ENCODE measurements at regions of chr6 and their contacts with region 1.

Region 1: GRCh38 chr6:31729515-31729978 is 448 bp upstream of the DDAH2 start:
- DNase-seq: peak; percentile 72 to 83 (median 77)
- H3K4me3 ChIP-seq: peak overlapping the region; percentile 87 to 96
- H3K4me3 Mint-ChIP-seq: peak overlapping the region; percentile 94 to 98 (median 97)
- H3K27ac ChIP-seq: peak overlapping the region; percentile 68
- H3K27ac Mint-ChIP-seq: peak overlapping the region; percentile 89 to 97 (median 94)
- H3K4me1 ChIP-seq: peaks cover 65% of the 10 kb centered on the region
- H3K4me1 Mint-ChIP-seq: peaks cover 32 to 70% (median 47%) of the 10 kb centered on the region in 4 donors
- H3K27me3 ChIP-seq: no peaks in the 10 kb centered on the region
- H3K27me3 Mint-ChIP-seq: no peaks in the 10 kb centered on the region

Region 2: DNA sequence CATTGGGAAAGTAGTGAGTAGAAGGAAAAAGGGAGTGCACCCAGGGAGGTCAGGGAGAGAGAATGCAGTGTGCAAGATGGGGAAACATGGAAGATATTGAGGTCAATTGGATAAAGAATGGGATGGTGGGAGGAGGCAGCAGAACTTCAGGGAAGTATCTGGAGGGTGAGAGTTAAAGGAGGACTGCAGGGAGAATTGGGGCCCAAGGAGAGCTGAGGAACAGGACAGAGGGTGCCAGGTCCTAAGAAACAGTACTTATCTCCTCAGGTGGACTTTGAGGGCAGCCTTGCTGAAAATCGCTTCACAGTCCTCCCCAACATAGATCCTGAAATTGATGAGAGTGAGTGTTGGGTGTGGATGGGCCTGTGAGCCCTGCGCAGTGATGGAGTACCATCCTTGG is 28.7 kb after region 1 on chr6:
- CTCF ChIA-PET with region 1: no interaction called
- POLR2A ChIA-PET with region 1: no interaction called
- intact Hi-C with region 1: no loop called
- DNase-seq: no peak
- H3K4me3 ChIP-seq: no peak overlapping the region
- H3K4me3 Mint-ChIP-seq: no peak overlapping the region
- H3K27ac ChIP-seq: no peak overlapping the region
- H3K27ac Mint-ChIP-seq: peak overlapping the region in 3 of 7 donors; percentile 10 to 72 (median 38)
- H3K4me1 ChIP-seq: no peaks in the 10 kb centered on the region
- H3K4me1 Mint-ChIP-seq: peaks cover 0 to 5% (median 0%) of the 10 kb centered on the region in 4 donors
- H3K27me3 ChIP-seq: no peaks in the 10 kb centered on the region
- H3K27me3 Mint-ChIP-seq: no peaks in the 10 kb centered on the region

Region 3: DNA sequence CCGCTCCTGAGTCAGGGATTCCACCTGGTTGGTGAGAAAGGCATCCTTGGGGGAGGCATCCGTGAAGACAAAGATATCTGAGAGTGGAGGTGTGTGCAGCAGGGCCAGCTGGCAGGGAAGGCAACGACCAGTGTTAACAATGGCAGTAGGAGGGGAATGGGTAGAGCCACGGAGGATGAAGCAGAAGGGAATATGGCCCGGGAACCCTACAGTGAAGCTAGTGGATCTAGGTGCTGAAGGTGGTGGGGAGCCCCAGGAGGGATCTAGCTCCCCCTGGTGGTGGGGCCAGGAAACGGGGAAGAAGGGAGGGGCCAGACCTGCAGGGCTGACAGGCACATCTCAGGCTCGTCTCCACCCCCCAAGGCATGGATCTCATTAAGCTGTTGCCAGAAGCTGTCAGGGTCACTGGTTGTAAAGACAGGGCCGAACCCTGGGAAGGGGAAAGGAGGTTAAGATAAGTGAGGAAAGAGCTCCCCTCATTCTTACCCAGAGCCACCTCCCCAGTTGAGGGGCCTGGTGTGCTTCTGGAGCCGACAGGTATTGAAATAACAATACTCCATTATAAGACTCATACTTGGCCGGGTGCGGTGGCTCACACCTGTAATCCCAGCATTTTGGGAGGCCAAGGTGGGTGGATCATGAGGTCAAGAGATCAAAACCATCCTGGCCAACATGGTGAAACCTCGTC is 40.3 kb after region 1 on chr6:
- CTCF ChIA-PET with region 1: interaction called, 173 read pairs
- POLR2A ChIA-PET with region 1: interaction called, 78 read pairs
- intact Hi-C with region 1: loop called (anchors 1 kb)
- DNase-seq: peak; percentile 75 to 81 (median 80)
- H3K4me3 ChIP-seq: no peak overlapping the region
- H3K4me3 Mint-ChIP-seq: peak overlapping the region in 2 of 8 donors; percentile 42 to 57
- H3K27ac ChIP-seq: no peak overlapping the region
- H3K27ac Mint-ChIP-seq: peak overlapping the region in 5 of 7 donors; percentile 0 to 65 (median 36)
- H3K4me1 ChIP-seq: peaks cover 35% of the 10 kb centered on the region
- H3K4me1 Mint-ChIP-seq: peaks cover 15 to 34% (median 24%) of the 10 kb centered on the region in 4 donors
- H3K27me3 ChIP-seq: no peaks in the 10 kb centered on the region
- H3K27me3 Mint-ChIP-seq: no peaks in the 10 kb centered on the region

Region 4: GRCh38 chr6:31806465-31807272 is 77.1 kb after region 1 on chr6 and contains the start of gene LSM2:
- CTCF ChIA-PET with region 1: interaction called, 13 read pairs
- POLR2A ChIA-PET with region 1: interaction called, 63 read pairs
- intact Hi-C with region 1: no loop called
- DNase-seq: peak; percentile 97 to 98 (median 97)
- H3K4me3 ChIP-seq: peak within 1 kb of the TSS; percentile 84 to 89
- H3K4me3 Mint-ChIP-seq: peak within 1 kb of the TSS; percentile 86 to 97 (median 90)
- H3K27ac ChIP-seq: peak within 1 kb of the TSS; percentile 80
- H3K27ac Mint-ChIP-seq: peak within 1 kb of the TSS; percentile 89 to 97 (median 93)
- H3K4me1 ChIP-seq: peaks cover 23% of the 10 kb centered on the region
- H3K4me1 Mint-ChIP-seq: peaks cover 11 to 37% (median 27%) of the 10 kb centered on the region in 4 donors
- H3K27me3 ChIP-seq: no peaks in the 10 kb centered on the region
- H3K27me3 Mint-ChIP-seq: no peaks in the 10 kb centered on the region
- total RNA-seq, gene LSM2: 30.0 to 34.6 TPM

Region 5: DNA sequence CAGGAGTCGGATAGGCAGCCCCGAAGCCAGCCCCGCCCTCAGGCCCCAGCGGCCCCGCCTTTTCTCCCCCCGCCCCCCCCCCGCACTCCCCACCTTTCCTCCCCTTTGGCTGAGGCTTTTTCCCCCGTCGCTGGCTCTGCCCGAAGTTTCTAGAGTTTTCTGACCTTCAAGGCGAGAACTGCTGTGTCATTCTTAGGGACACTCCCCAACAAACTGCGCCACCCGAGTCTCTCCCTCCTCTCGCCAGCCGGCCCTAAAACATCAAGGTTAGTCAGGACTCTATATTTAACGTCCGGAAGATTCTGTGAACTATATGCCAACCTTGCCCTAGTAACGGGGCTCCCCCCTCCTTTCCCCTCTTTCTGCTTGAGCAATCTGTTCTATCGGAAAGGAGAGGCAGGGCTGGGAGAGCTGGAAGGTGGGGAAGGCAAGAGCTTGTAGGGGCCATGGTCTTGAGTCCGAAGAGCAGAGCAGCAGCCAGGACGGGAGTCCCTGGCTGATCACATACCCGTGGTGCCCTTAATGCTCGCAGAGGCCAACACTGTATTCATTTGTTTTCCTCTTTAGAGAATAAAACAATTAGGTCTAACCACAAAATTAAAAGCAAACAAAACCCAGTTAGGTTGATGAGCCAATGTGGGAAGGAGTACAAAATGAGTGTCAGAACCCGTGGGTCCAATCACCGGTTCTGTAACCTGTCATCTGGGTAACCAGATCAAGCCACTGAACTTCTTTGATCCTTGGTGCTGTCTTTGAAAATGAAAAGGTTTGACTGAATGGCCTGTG is 92.7 kb after region 1 on chr6:
- CTCF ChIA-PET with region 1: interaction called, 21 read pairs
- POLR2A ChIA-PET with region 1: interaction called, 81 read pairs
- intact Hi-C with region 1: loop called (anchors 2 kb)
- DNase-seq: peak; percentile 71 to 83 (median 73)
- H3K4me3 ChIP-seq: peak overlapping the region; percentile 84 to 96
- H3K4me3 Mint-ChIP-seq: peak overlapping the region; percentile 94 to 98 (median 97)
- H3K27ac ChIP-seq: peak overlapping the region; percentile 74
- H3K27ac Mint-ChIP-seq: peak overlapping the region; percentile 98 to 99 (median 98)
- H3K4me1 ChIP-seq: peaks cover 72% of the 10 kb centered on the region
- H3K4me1 Mint-ChIP-seq: peaks cover 31 to 81% (median 54%) of the 10 kb centered on the region in 4 donors
- H3K27me3 ChIP-seq: no peaks in the 10 kb centered on the region
- H3K27me3 Mint-ChIP-seq: no peaks in the 10 kb centered on the region

Region 6: GRCh38 chr6:31888276-31889258 is 159.0 kb after region 1 on chr6:
- CTCF ChIA-PET with region 1: interaction called, 11 read pairs
- POLR2A ChIA-PET with region 1: interaction called, 3 read pairs
- intact Hi-C with region 1: no loop called
- DNase-seq: peak; percentile 34 to 41 (median 39)
- H3K4me3 ChIP-seq: no peak overlapping the region
- H3K4me3 Mint-ChIP-seq: no peak overlapping the region
- H3K27ac ChIP-seq: no peak overlapping the region
- H3K27ac Mint-ChIP-seq: peak overlapping the region in 1 of 7 donors; percentile 70
- H3K4me1 ChIP-seq: no peaks in the 10 kb centered on the region
- H3K4me1 Mint-ChIP-seq: peaks cover 1 to 6% (median 5%) of the 10 kb centered on the region in 4 donors
- H3K27me3 ChIP-seq: no peaks in the 10 kb centered on the region
- H3K27me3 Mint-ChIP-seq: no peaks in the 10 kb centered on the region

Measured in CD4-positive, alpha-beta memory T cell (primary cell).